ENCODE measurements at regions of chr22 and their contacts with region 1.

Region 1: GRCh38 chr22:45934659-45935341 is 42.2 kb downstream of the WNT7B start:
- DNase-seq: peak; percentile 98
- H3K4me3 ChIP-seq: peak overlapping the region in 2 of 3 experiments; percentile 29 to 42
- H3K27ac ChIP-seq: peak overlapping the region; percentile 75
- H3K4me1 ChIP-seq: peaks cover 20% of the 10 kb centered on the region
- H3K27me3 ChIP-seq: no peaks in the 10 kb centered on the region
- CTCF ChIP-seq: no peak

Region 2: DNA sequence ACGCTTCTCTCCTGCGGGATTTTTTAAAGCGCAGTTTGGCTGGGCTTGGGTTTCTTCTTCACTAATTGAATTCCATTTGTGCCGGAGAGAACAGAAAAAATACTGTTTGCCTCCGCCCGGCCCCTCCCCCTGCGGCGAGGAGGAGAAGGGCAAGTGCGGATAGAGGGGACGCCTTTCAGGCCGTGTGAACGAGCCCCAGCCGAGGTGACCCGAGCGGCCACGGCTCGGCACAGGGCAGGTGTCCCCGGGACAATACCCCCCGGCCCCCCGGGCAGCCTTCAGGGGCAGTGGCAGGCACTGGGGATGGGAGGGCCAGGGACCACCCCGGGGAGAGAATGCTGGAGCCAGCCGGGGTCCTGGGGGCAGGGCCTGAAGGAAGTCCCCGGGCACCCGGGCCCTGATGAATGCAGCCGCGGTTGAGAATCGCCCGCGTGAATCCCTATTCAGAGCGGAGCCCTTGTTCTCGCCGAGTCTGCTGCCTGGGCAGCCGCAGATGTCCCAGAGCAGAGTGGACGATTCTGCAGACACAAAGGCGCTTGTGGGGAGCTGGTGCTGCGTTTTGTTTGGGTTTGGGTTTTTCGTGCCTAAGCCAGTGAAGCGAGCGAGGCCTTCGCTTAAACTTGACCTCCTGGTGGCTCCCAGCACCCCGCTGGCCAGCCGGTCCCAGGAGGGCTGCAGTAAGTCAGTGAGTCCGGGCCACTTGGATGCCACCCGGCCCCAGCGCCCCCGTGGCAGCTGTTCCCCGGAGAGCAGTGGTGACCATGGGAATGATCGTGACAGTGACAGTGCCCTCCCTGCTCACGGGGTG is 53.9 kb before region 1 on chr22:
- CTCF ChIA-PET with region 1: no interaction called
- dilution Hi-C with region 1: loop called (anchors 5 kb)
- in situ Hi-C with region 1: no loop called
- intact Hi-C with region 1: no loop called
- DNase-seq: no peak
- H3K4me3 ChIP-seq: no peak overlapping the region
- H3K27ac ChIP-seq: no peak overlapping the region
- H3K4me1 ChIP-seq: peaks cover 7% of the 10 kb centered on the region
- H3K27me3 ChIP-seq: peaks cover 10% of the 10 kb centered on the region
- CTCF ChIP-seq: peak in 1 of 2 donors; percentile 7

Region 3: GRCh38 chr22:45918459-45919370 is 16.1 kb before region 1 on chr22:
- CTCF ChIA-PET with region 1: no interaction called
- dilution Hi-C with region 1: no loop called
- in situ Hi-C with region 1: no loop called
- intact Hi-C with region 1: loop called (anchors 1 kb)
- DNase-seq: peak; percentile 46
- H3K4me3 ChIP-seq: no peak overlapping the region
- H3K27ac ChIP-seq: no peak overlapping the region
- H3K4me1 ChIP-seq: peaks cover 16% of the 10 kb centered on the region
- H3K27me3 ChIP-seq: no peaks in the 10 kb centered on the region
- CTCF ChIP-seq: no peak

Region 4: DNA sequence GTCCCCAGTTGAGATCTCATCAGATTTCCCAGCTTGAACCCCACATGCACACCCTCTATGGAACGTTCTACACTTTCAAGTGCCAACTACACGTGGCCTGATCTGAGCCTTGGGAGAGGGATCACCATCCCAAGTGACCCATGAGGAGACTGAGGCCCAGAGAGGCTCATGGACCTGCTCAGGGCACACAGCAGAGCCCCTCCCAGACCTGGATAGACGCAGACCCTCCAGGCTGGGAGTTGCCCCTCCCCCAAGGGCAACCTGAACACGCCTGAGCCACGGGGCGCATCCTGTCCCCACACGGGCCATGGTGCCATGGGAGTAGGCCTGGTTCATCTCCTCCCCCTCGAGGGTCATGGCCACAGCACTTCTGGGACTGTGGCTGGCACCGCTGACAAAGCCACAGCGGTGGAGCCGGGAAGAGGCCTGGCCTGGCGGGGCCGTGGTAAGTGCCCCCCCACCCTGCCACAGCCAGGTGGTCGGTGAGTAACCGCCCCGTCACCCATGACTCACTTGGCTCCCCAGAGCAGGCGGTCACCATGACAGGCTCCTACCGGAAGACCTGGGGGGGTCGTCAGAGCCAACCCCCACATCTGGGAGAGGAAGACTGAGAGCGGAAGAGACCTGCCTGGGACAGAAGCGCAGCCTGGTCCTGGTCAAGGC is 34.1 kb after region 1 on chr22:
- CTCF ChIA-PET with region 1: no interaction called
- dilution Hi-C with region 1: no loop called
- in situ Hi-C with region 1: no loop called
- intact Hi-C with region 1: loop called (anchors 2 kb)
- DNase-seq: peak; percentile 86
- H3K4me3 ChIP-seq: no peak overlapping the region
- H3K27ac ChIP-seq: no peak overlapping the region
- H3K4me1 ChIP-seq: peaks cover 32% of the 10 kb centered on the region
- H3K27me3 ChIP-seq: peaks cover 18% of the 10 kb centered on the region
- CTCF ChIP-seq: no peak